Left ventricle myocardium inferior (tissue), 1 donor: ENCODE measurements at regions of chr12 and their contacts with region 1.

Region 1: GRCh38 chr12:49838973-49839633 is 3.8 kb downstream of the BCDIN3D start:
- DNase-seq: no peak
- H3K4me3 ChIP-seq: no peak overlapping the region
- H3K27ac ChIP-seq: no peak overlapping the region
- H3K4me1 ChIP-seq: peaks cover 23% of the 10 kb centered on the region
- H3K27me3 ChIP-seq: no peaks in the 10 kb centered on the region
- CTCF ChIP-seq: peak; percentile 82

Region 2: GRCh38 chr12:49762468-49762847 is 76.6 kb before region 1 on chr12:
- intact Hi-C with region 1: no loop called
- DNase-seq: no peak
- H3K4me3 ChIP-seq: no peak overlapping the region
- H3K27ac ChIP-seq: peak overlapping the region; percentile 68
- H3K4me1 ChIP-seq: peaks cover 34% of the 10 kb centered on the region
- H3K27me3 ChIP-seq: no peaks in the 10 kb centered on the region
- CTCF ChIP-seq: no peak

Region 3: DNA sequence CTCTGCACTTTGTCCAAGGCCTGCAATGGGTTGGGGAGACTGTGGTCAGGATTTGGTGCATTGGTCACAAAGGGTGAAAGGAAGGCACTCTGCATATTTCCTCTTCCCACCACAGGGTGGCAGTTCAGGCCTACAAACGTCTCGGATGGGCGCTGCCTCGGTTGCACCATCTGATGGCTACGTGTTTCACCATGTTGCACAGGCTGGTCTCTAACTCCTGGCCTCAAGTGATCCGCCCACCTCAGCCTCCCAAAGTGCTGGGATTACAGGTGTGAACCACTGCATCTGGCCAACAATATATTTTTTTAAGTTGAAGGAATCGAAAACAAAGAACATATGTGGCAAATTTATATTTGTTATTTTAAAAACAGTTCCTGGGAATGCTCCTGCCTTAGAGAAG is 62.7 kb before region 1 on chr12:
- intact Hi-C with region 1: loop called (anchors 5 kb)
- DNase-seq: peak; percentile 63
- H3K4me3 ChIP-seq: no peak overlapping the region
- H3K27ac ChIP-seq: no peak overlapping the region
- H3K4me1 ChIP-seq: peaks cover 9% of the 10 kb centered on the region
- H3K27me3 ChIP-seq: no peaks in the 10 kb centered on the region
- CTCF ChIP-seq: peak; percentile 84

Region 4: GRCh38 chr12:49974231-49974675 is 135.2 kb after region 1 on chr12:
- intact Hi-C with region 1: no loop called
- DNase-seq: peak; percentile 69
- H3K4me3 ChIP-seq: no peak overlapping the region
- H3K27ac ChIP-seq: no peak overlapping the region
- H3K4me1 ChIP-seq: peaks cover 15% of the 10 kb centered on the region
- H3K27me3 ChIP-seq: peaks cover 58% of the 10 kb centered on the region
- CTCF ChIP-seq: peak; percentile 73